ENCODE measurements at regions of chr3 and their contacts with region 1.

Region 1: DNA sequence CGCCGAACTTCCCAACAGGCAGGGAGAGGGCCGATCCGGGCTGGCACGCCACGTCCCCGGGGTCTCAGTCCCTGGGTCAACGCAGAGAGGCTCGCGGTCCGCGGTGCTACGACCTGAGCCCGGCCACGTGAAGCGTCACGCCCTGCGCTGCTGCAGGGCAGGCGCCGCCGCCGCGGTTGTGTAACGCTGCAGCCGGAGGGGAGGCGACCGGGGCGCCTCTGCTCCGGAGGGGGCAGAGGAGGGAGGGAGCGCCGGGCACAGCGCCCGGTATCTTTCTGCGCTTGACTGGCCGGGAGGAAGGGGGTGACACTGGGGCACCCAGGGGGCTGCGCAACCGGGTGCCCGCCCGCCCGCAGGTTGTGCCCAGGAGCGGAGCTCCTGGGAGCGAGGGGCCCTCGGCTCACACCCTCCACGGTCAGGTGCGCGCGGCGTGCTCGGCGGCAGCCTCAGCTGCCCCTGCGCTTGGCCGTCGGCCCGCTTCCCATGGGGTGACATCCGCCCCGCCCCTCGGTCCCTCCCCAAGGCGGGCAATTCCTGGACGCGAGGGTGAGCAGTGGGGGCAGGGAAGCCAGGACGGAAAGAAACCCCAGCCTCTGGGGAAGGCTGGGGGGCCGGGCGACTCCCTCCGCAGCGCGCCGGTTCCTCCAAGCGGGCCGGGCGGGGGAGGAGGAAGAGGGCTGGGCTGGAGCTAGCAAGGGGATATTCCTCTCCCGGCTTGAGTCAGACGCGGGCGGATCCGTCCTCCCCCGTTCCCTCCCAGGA is 852 bp upstream of the BHLHE40 start:
- H3K4me3 Mint-ChIP-seq: peak overlapping the region; percentile 98
- H3K27ac Mint-ChIP-seq: peak overlapping the region; percentile 99
- H3K4me1 Mint-ChIP-seq: peaks cover 40% of the 10 kb centered on the region
- H3K27me3 Mint-ChIP-seq: no peaks in the 10 kb centered on the region

Region 2: GRCh38 chr3:4565806-4566501 is 412.4 kb before region 1 on chr3:
- intact Hi-C with region 1: no loop called
- H3K4me3 Mint-ChIP-seq: no peak overlapping the region
- H3K27ac Mint-ChIP-seq: no peak overlapping the region
- H3K4me1 Mint-ChIP-seq: peaks cover 20% of the 10 kb centered on the region
- H3K27me3 Mint-ChIP-seq: no peaks in the 10 kb centered on the region

Region 3: DNA sequence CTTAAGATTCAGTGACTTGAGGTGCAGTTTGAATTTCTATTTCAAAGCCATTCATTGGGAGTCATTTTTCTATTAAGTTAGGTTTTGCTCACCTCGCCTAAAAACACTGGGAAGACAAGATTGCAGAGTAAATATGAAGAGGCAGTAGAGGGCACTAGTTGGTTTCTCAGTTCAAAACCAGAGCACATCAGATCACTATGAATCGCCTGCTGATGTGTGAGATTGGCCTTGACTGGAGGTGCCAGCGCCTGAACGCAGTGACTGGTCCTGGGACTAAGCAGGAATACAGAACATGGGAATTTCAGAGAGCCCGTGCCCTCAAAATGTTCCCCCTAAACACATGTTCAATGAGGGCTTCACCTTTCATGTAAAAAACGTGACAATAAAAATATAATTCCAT is 256.3 kb before region 1 on chr3:
- intact Hi-C with region 1: loop called (anchors 2 kb)
- H3K4me3 Mint-ChIP-seq: no peak overlapping the region
- H3K27ac Mint-ChIP-seq: peak overlapping the region; percentile 63
- H3K4me1 Mint-ChIP-seq: peaks cover 19% of the 10 kb centered on the region
- H3K27me3 Mint-ChIP-seq: no peaks in the 10 kb centered on the region

Region 4: GRCh38 chr3:4831580-4831950 is 146.8 kb before region 1 on chr3:
- intact Hi-C with region 1: loop called (anchors 2 kb)
- H3K4me3 Mint-ChIP-seq: peak overlapping the region; percentile 64
- H3K27ac Mint-ChIP-seq: peak overlapping the region; percentile 96
- H3K4me1 Mint-ChIP-seq: peaks cover 82% of the 10 kb centered on the region
- H3K27me3 Mint-ChIP-seq: no peaks in the 10 kb centered on the region

Region 5: DNA sequence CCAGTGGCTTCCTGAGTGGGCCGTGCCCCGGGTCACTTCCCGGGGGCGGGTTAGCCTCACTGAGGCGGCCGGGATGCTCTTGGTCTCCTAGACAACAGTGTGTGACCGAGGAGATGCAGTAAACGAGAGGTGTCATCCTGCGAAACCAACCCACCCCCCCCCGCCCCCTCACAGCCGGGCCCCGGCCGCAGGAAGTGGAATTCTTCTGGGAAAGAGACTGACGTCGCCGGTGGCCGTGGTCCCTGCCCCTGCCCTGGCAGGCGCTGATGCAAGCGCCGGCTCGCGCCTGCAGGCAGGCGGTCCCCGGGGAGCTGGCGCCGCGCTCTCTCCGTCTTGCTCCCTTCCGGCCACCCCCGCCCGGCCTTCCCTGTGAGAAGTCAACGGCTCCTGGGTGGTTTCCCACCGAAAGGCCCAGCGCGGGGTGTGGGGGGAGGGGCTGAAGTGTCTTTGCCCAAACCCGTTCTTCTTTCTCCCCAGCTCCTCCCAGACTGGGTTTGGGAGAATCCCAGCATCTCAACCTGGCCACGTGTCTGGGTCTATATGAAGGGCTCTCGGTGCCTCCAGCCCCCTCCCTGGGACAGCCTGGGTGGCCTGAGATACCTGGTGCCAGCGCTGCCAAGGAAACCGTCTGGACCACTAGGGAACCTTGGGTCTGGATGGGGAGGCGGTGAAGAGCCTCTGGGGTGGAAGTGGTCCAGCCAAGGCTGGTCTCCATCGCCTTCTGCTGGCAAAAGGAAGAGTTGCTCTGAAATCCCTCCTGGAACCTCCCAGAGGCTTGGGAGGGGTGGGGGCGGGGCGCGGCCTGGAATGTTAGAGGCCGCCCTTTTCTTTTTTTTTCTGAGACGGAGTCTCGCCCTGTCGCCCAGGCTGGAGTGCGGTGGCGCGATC is 48.2 kb after region 1 on chr3:
- intact Hi-C with region 1: loop called (anchors 2 kb)
- H3K4me3 Mint-ChIP-seq: peak overlapping the region; percentile 89
- H3K27ac Mint-ChIP-seq: peak overlapping the region; percentile 93
- H3K4me1 Mint-ChIP-seq: peaks cover 41% of the 10 kb centered on the region
- H3K27me3 Mint-ChIP-seq: peaks cover 1% of the 10 kb centered on the region

Region 6: GRCh38 chr3:5187156-5187919 is 209.0 kb after region 1 on chr3 and contains the start of gene EDEM1:
- intact Hi-C with region 1: loop called (anchors 5 kb)
- H3K4me3 Mint-ChIP-seq: peak within 1 kb of the TSS; percentile 98
- H3K27ac Mint-ChIP-seq: peak within 1 kb of the TSS; percentile 85
- H3K4me1 Mint-ChIP-seq: peaks cover 50% of the 10 kb centered on the region
- H3K27me3 Mint-ChIP-seq: no peaks in the 10 kb centered on the region